Naive thymus-derived CD4-positive, alpha-beta T cell (primary cell): ENCODE measurements at regions of chr5 and their contacts with region 1.

Region 1: DNA sequence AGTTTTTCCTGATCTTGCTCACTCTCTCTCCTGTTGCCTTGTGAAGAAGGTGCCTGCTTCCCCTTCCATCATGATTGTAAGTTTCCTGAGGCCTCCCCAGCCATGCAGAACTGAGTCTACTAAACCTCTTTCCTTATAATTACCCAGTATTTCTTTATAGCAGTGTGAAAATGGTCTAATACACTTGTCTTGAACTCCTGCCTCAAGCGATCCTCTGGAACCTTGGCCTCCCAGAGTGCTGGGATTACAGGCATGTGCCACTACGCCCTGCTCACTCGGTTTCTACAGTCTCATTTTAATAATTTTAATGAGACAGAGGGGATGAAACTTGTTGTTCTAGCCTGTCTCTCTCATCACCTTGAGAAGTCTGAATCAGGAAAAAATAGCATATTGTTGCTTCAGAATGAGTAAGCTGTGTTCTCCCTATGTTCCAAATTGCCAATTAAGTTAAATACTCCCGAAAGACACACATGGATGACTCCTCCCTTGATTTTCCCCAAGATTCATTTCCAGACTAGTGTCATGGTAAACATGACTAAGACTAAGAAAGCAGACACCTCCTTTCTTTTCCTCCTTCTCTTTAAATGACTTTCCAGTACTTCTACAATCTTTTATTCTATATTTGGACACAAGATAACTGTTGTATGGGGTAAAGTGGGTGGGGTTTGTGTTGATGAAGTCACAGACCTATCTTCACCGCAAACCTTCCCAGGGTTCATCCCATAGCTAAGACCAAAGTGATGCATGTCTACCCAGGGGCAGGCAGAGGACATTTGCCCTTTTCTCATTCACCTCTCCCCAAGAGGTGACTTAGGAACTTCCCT is 7.8 kb upstream of the DNAJC18 start:
- DNase-seq: no peak
- ATAC-seq: no peak
- H3K4me3 ChIP-seq: no peak overlapping the region
- H3K4me3 Mint-ChIP-seq: peak overlapping the region in 1 of 10 donors; percentile 56
- H3K27ac ChIP-seq: no peak overlapping the region
- H3K27ac Mint-ChIP-seq: peak overlapping the region in 4 of 9 donors; percentile 45 to 86 (median 80)
- H3K4me1 ChIP-seq: peaks cover 25 to 30% of the 10 kb centered on the region in 2 donors
- H3K4me1 Mint-ChIP-seq: peaks cover 23 to 61% (median 49%) of the 10 kb centered on the region in 7 donors
- H3K27me3 ChIP-seq: no peaks in the 10 kb centered on the region
- H3K27me3 Mint-ChIP-seq: no peaks in the 10 kb centered on the region

Region 2: GRCh38 chr5:138874771-138875551 is 572.2 kb before region 1 on chr5 and contains the start of gene LRRTM2:
- CTCF ChIA-PET with region 1: no interaction called
- POLR2A ChIA-PET with region 1: interaction called, 11 read pairs
- intact Hi-C with region 1: no loop called
- DNase-seq: no peak
- ATAC-seq: no peak
- H3K4me3 ChIP-seq: no peak within 1 kb of the TSS
- H3K4me3 Mint-ChIP-seq: no peak within 1 kb of the TSS
- H3K27ac ChIP-seq: no peak within 1 kb of the TSS
- H3K27ac Mint-ChIP-seq: peak within 1 kb of the TSS in 1 of 9 donors; percentile 21
- H3K4me1 ChIP-seq: peaks cover 0 to 12% of the 10 kb centered on the region in 2 donors
- H3K4me1 Mint-ChIP-seq: peaks cover 6 to 17% (median 12%) of the 10 kb centered on the region in 7 donors
- H3K27me3 ChIP-seq: no peaks in the 10 kb centered on the region
- H3K27me3 Mint-ChIP-seq: peaks cover 27 to 43% (median 36%) of the 10 kb centered on the region in 5 donors
- total RNA-seq, gene LRRTM2: 0.07 to 0.22 (median 0.11) TPM in 3 of 5 experiments, not detected in the others